AG04450 (cell line): ENCODE measurements at regions of chr3 and their contacts with region 1.

Region 1: GRCh38 chr3:47802734-47803477 is at the start of gene DHX30:
- DNase-seq: no peak
- H3K4me3 ChIP-seq: peak within 1 kb of the TSS; percentile 87
- H3K27ac ChIP-seq: peak within 1 kb of the TSS; percentile 96
- H3K27me3 ChIP-seq: no peaks in the 10 kb centered on the region
- CTCF ChIP-seq: no peak
- polyA plus RNA-seq, gene DHX30: 30.7 and 36.1 TPM in 2 replicates

Region 2: GRCh38 chr3:49158108-49158709 is 1355.3 kb after region 1 on chr3:
- CTCF ChIA-PET with region 1: interaction called, 12 read pairs
- POLR2A ChIA-PET with region 1: no interaction called
- DNase-seq: no peak
- H3K4me3 ChIP-seq: no peak overlapping the region
- H3K27ac ChIP-seq: no peak overlapping the region
- H3K27me3 ChIP-seq: no peaks in the 10 kb centered on the region
- CTCF ChIP-seq: peak; percentile 13; the same call in 1 of the 2 replicates